ENCODE measurements at regions of chr19 and their contacts with region 1.

Region 1: DNA sequence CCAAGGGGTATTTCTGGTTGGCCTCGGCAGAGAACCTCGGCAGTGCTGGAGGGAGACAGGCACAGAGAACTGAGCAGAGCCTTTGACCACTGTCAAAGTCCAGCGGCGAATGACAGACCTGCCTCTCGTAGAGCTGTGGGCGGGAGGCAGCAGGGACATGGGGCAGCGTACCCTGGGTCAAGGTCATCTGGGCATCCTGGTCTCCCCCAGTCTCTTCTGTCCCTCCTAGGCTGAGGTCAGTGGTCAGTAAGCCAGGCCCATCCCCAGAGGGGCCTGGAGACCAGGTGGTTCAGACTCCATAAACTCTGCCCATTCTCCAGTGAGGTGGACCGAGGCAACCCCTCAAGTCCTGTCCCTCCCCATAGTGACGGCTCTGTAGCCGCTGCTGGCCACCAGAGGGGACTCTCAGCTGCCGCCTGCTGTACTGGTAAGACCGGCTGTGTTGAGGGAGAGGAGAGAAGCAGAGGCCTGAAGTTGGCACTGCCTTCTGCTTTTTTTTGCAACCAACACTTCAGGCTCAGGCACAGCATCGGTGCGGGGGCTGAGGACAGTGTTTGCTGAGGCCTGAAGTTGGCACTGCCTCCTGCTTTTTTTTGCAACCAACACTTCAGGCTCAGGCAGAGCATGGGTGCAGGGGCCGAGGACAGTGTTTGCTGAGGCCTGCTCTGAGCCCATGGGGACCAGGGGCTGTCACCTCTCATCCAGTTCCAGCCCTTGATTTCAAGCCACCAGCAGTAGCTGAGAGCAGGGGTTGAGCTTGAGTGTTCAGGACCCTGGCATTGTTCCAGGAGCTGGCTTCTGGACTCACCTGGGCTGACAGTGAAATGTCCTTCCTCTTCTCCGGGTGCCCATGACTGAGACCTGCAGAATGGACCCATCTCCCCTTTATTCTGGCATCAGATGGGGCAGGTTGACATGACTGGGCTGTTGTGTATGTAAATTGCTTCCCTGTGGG is at the start of gene PGLYRP2:
- DNase-seq: peak; percentile 37
- ATAC-seq: peak; percentile 42
- H3K4me3 Mint-ChIP-seq: no peak within 1 kb of the TSS
- H3K27ac Mint-ChIP-seq: no peak within 1 kb of the TSS
- H3K4me1 Mint-ChIP-seq: peaks cover 34% of the 10 kb centered on the region
- H3K27me3 Mint-ChIP-seq: no peaks in the 10 kb centered on the region
- total RNA-seq, gene PGLYRP2: 0.14 TPM in 1 of 2 experiments, not detected in the other

Region 2: DNA sequence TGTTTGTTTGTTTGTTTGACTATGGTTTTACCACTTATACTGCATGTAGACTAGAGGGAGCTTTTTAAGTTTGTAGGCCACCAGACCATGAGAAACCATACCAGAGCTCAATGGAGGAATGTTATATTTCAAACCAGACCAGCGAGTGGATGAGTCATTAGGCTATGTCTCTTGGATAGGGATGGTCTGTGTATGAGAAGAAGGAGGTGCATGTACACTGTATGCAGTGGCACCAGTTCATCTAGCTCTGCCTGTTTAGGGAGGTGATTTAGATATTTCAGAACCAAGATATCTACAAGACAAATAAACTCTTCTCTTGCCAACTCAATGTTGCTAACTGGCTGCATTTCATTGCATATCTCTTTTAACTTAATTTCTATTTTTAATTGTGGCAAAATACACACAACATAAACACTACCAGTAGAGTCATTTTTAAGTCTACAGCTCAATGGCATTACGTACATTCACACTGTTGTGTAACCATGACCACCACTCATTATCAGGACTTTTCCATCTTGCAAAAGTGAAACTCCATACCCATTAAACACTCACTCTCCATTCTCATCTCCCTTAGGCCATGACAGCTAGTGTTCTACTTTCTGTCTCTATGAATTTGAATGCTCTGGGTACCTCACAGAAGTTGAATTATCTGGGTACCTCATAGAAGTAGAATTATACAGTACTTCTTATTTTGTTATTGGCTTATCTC is 343.3 kb before region 1 on chr19:
- CTCF ChIA-PET with region 1: no interaction called
- POLR2A ChIA-PET with region 1: no interaction called
- intact Hi-C with region 1: no loop called
- DNase-seq: no peak
- ATAC-seq: peak; percentile 47
- H3K4me3 Mint-ChIP-seq: no peak overlapping the region
- H3K27ac Mint-ChIP-seq: no peak overlapping the region
- H3K4me1 Mint-ChIP-seq: peaks cover 3% of the 10 kb centered on the region
- H3K27me3 Mint-ChIP-seq: no peaks in the 10 kb centered on the region

Region 3: GRCh38 chr19:15532779-15533521 is 53.3 kb after region 1 on chr19:
- CTCF ChIA-PET with region 1: interaction called, 3 read pairs
- POLR2A ChIA-PET with region 1: interaction called, 6 read pairs
- intact Hi-C with region 1: loop called in 1 of 2 experiments (anchors 5 kb)
- DNase-seq: peak; percentile 46
- ATAC-seq: peak; percentile 86
- H3K4me3 Mint-ChIP-seq: peak overlapping the region; percentile 19
- H3K27ac Mint-ChIP-seq: peak overlapping the region; percentile 57
- H3K4me1 Mint-ChIP-seq: peaks cover 41% of the 10 kb centered on the region
- H3K27me3 Mint-ChIP-seq: no peaks in the 10 kb centered on the region

Measured in activated CD4-positive, alpha-beta T cell treated with anti-CD3 and anti-CD28 coated beads for 36 hours (primary cell).